ENCODE measurements at regions of chr5 and their contacts with region 1.

Region 1: DNA sequence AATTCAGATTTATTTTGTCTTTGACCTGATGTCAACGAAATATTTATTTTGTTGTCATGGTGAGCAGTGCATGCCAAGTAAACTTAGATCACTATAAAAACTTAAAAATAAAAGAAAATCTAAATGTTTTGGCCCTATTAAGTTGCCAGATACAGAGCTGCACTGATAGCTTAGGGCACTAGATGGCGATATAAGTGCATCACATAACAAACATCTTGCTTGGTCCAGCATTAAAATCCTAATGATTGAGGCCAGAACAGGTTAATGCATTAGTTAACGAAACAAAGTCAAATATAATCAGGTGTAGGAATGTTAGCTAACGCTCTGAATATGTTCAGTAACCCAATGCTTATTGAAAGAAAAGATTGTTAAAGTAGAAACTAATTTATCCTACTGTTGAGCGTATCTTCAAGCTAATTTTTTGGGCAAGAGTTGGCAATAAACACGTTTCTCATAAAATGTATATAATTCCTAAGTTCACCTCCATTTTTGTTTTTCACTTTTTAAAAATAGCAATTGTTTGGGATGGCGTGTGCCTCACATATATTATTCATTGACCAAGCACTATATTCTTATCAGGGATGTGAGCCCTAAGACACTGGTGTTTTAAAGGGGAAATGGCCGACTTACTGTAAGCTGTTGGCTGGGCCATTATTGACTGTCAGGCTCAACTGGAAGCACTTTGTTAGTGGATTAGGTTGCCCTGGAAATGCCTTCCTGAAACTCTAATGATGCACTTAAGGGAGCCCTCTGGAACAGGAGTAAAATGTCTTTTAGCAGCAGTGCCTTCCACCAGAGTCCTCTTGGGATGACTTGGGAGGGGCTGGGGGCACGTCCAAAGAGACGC is 33.3 kb downstream of the KCTD16 start:
- DNase-seq: peak; percentile 30
- H3K4me3 ChIP-seq: no peak overlapping the region
- H3K27me3 ChIP-seq: peaks cover 2% of the 10 kb centered on the region
- CTCF ChIP-seq: peak; percentile 83

Region 2: GRCh38 chr5:143456952-143457547 is 746.9 kb before region 1 on chr5:
- CTCF ChIA-PET with region 1: no interaction called
- POLR2A ChIA-PET with region 1: no interaction called
- DNase-seq: no peak
- H3K4me3 ChIP-seq: no peak overlapping the region
- H3K27me3 ChIP-seq: no peaks in the 10 kb centered on the region
- CTCF ChIP-seq: no peak

Region 3: DNA sequence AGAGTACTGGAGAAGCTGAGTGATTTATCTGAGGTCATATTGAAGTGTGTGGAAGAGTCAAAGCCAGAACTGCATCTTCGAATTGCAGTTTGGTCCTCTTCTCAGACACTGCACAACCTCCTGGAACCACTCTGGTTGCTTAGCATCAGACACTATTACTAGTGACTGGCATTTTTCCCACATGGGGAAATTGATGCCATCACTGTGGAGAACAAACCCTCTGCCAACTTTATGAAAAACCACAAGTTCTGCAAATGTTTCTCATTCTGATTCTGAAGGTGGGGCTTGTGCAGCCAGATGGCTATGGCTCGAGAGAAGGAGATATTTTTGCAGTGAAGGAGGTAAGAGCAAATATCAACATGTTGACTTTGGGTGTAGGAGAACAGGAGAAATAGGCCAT is 33.9 kb after region 1 on chr5:
- CTCF ChIA-PET with region 1: no interaction called
- POLR2A ChIA-PET with region 1: no interaction called
- DNase-seq: no peak
- H3K4me3 ChIP-seq: no peak overlapping the region
- H3K27me3 ChIP-seq: no peaks in the 10 kb centered on the region
- CTCF ChIP-seq: no peak

Region 4: GRCh38 chr5:144390133-144390532 is 186.2 kb after region 1 on chr5:
- CTCF ChIA-PET with region 1: interaction called, 10 read pairs
- POLR2A ChIA-PET with region 1: no interaction called
- DNase-seq: no peak
- H3K4me3 ChIP-seq: no peak overlapping the region
- H3K27me3 ChIP-seq: no peaks in the 10 kb centered on the region
- CTCF ChIP-seq: peak; percentile 30

Region 5: DNA sequence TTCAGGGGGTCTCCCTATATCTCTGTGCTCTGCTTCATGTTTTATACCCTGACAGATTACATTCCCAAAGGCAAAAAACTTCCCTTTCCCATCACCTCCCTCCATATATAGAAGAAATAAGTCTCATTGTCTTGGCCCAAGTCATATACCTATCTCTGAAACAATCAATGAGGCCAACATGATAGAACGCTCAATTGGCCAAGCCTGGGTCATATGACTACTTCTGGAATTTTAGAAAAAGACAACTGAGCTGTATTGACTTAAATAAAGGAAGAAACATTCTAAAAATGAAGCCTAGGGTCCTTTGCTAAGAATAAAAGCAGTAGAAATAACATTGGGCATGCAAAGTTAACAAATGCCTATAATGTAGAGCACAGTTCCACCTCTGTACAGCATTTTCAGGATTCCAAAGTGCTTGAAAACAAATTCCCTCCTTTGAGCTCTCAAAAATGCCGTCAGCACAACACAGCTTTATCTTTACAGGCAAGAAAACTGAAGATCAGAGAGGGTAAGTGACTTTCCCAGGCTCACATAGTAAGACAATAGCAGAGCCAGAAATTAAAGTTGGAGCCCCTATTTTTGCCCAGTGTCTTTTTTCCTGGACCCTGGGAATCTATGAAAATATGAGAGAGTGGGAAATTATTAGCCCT is 1239.4 kb after region 1 on chr5:
- CTCF ChIA-PET with region 1: no interaction called
- POLR2A ChIA-PET with region 1: no interaction called
- DNase-seq: no peak
- H3K4me3 ChIP-seq: no peak overlapping the region
- H3K27me3 ChIP-seq: no peaks in the 10 kb centered on the region
- CTCF ChIP-seq: no peak

Region 6: GRCh38 chr5:145825751-145826180 is 1621.8 kb after region 1 on chr5:
- CTCF ChIA-PET with region 1: interaction called, 39 read pairs
- POLR2A ChIA-PET with region 1: no interaction called
- DNase-seq: no peak
- H3K4me3 ChIP-seq: no peak overlapping the region
- H3K27me3 ChIP-seq: no peaks in the 10 kb centered on the region
- CTCF ChIP-seq: peak; percentile 80

Region 7: GRCh38 chr5:145887976-145888574 is 1684.1 kb after region 1 on chr5:
- CTCF ChIA-PET with region 1: interaction called, 36 read pairs
- POLR2A ChIA-PET with region 1: no interaction called
- DNase-seq: no peak
- H3K4me3 ChIP-seq: no peak overlapping the region
- H3K27me3 ChIP-seq: no peaks in the 10 kb centered on the region
- CTCF ChIP-seq: peak; percentile 89